ENCODE measurements at regions of chr9 and their contacts with region 1.

Region 1: DNA sequence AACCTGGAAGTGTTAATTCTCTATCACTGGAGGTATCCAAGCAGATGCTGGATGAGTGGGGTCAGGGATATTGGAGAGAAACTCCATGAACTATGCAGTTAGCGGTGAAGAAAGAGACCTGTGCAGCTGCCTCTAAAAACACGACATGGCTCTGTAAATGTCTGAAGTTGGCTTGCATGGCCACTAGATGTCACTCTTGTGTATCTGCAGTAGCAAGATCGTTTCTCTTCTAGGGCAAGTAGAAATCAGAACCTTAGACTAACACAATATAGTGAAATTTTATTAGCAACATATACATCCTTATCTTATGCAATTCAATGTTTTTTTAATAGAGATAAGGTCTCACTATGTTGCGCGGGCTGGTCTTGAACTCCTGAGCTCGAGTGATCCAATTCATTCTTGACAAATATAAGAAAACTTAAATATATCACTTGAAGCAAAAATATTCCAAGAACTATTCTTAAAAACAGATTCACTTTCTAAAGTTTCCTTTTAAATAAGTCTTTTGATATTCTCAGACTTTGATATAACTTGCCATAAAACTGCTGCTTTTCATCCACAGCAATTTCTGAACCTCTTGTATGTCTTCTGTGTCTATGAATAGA is 2.9 kb downstream of the OR2S2 start:
- DNase-seq: no peak
- ATAC-seq: peak; percentile 94
- H3K4me3 ChIP-seq: no peak overlapping the region
- H3K27ac ChIP-seq: no peak overlapping the region
- H3K4me1 ChIP-seq: peaks cover 3% of the 10 kb centered on the region
- H3K27me3 ChIP-seq: no peaks in the 10 kb centered on the region
- CTCF ChIP-seq: peak; percentile 89

Region 2: GRCh38 chr9:36023260-36024048 is 68.4 kb after region 1 on chr9:
- intact Hi-C with region 1: loop called (anchors 5 kb)
- DNase-seq: peak; percentile 69
- ATAC-seq: peak; percentile 92
- H3K4me3 ChIP-seq: no peak overlapping the region
- H3K27ac ChIP-seq: no peak overlapping the region
- H3K4me1 ChIP-seq: no peaks in the 10 kb centered on the region
- H3K27me3 ChIP-seq: no peaks in the 10 kb centered on the region
- CTCF ChIP-seq: peak; percentile 77

Measured in upper lobe of right lung (tissue), 1 donor.